Left cardiac atrium (tissue), 4 donors: ENCODE measurements at regions of chr5 and their contacts with region 1.

Region 1: GRCh38 chr5:142826741-142827732 is 56.9 kb downstream of the ARHGAP26 start:
- DNase-seq: no peak
- ATAC-seq: peak in 1 of 2 donors; percentile 11

Region 2: GRCh38 chr5:142783601-142784341 is 43.3 kb before region 1 on chr5:
- intact Hi-C with region 1: loop called in 1 of 2 experiments (anchors 5 kb)
- DNase-seq: peak; percentile 55
- ATAC-seq: peak; percentile 62 to 68